Colonic mucosa (tissue), 4 donors: ENCODE measurements at regions of chr13 and their contacts with region 1.

Region 1: DNA sequence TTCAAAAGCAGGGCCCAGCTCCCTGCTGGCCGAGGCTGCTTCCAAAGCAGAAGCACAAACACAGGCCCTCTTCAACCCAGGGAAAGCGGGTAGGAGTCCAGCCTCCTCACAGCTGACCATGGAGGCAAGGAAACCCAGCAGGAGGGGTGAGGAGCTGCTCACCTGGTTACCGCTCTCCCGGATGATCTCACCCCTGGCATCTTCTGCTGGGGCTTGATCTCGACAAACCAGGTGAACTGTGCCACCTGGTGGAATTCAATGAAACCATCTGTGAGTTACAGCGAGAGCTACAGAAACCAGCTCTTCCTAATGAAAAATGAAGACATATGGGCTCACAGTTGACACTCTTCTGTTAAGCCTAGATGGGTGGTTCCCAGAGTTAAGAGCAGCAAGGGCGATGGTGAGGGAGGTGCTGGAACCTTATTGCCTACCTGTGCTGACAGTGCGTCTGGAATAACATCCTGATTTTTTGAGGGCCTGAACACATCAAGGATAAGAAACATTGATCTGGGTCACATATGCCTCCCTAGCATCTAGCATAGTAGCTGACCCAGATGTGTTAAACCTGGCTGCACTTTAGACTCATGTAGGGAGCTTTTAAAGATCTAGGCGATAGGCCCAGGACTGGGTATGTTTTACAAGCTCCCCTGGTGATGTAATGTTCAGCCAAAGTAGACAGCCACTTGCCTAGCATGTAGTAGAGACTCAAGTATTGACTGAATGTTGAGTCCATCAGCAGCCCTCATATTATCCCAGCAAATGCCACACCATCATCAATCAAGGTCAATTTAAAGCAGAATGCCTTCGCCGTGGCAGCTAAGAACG is 6.1 kb downstream of the DHRS12 start:
- DNase-seq: peak; percentile 42
- H3K4me3 ChIP-seq: no peak overlapping the region
- H3K27ac ChIP-seq: no peak overlapping the region
- H3K4me1 ChIP-seq: peaks cover 7% of the 10 kb centered on the region
- H3K27me3 ChIP-seq: no peaks in the 10 kb centered on the region
- CTCF ChIP-seq: peak; percentile 43

Region 2: DNA sequence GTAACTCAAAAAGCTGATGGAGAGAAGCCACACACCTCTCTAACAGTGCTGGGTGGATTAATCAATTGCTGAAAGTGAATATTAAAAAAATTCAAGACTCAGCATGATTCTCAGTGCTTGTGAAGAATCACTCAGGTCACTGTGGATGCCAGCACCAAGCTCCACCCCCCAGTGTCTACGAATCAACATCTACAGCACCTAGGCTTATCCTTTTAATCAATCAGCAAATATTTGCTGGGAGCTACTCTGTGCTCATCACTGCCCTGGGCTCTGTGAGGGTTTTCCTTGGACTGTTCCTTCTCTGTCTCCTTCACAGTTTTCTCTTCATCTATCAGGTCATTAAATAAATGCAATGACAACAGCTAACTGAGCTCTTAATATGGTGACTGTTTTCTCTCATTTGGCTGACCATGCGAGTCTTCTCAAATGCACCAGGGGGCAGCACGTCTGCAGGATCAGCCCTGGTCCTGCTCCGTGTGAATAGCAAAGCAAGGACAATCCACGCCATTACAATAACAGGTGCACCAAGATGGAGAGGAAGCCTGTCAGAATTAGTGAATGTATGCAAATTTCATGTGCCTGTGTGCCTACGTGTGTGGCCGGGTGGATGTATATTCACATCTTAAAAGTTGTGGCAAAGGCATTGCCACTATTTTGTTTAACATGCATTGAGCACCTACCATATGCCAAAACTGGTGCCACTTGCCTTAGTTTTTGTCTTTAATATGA is 672.2 kb before region 1 on chr13:
- intact Hi-C with region 1: loop called (anchors 10 kb)
- DNase-seq: peak; percentile 43
- H3K4me3 ChIP-seq: no peak overlapping the region
- H3K27ac ChIP-seq: no peak overlapping the region
- H3K4me1 ChIP-seq: no peaks in the 10 kb centered on the region
- H3K27me3 ChIP-seq: peaks cover 2% of the 10 kb centered on the region
- CTCF ChIP-seq: peak; percentile 56

Region 3: GRCh38 chr13:51405176-51405575 is 392.7 kb before region 1 on chr13:
- intact Hi-C with region 1: no loop called
- DNase-seq: no peak
- H3K4me3 ChIP-seq: no peak overlapping the region
- H3K27ac ChIP-seq: no peak overlapping the region
- H3K4me1 ChIP-seq: no peaks in the 10 kb centered on the region
- H3K27me3 ChIP-seq: no peaks in the 10 kb centered on the region
- CTCF ChIP-seq: no peak

Region 4: GRCh38 chr13:51435002-51435578 is 362.8 kb before region 1 on chr13:
- intact Hi-C with region 1: loop called (anchors 5 kb)
- DNase-seq: no peak
- H3K4me3 ChIP-seq: no peak overlapping the region
- H3K27ac ChIP-seq: no peak overlapping the region
- H3K4me1 ChIP-seq: no peaks in the 10 kb centered on the region
- H3K27me3 ChIP-seq: no peaks in the 10 kb centered on the region
- CTCF ChIP-seq: peak; percentile 27

Region 5: DNA sequence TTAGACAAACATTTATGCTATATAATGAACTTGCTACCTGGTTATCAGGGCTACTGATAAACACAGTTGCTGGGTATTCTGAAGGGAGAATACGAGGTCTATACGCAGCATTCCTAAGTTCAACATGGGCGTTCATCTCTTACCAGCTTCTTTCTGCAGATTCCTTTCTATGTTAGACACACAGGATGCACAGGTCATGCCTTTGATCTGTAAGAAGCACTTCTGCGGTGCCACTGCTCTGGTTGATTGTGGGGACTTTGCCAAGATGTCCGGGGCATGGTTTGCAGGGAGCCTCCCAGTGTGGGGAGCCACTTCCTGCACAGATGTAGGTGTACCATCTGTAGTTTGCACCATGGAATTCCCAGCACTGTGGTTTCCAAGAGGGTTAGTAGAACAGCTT is 172.5 kb after region 1 on chr13:
- intact Hi-C with region 1: no loop called
- DNase-seq: no peak
- H3K4me3 ChIP-seq: no peak overlapping the region
- H3K27ac ChIP-seq: no peak overlapping the region
- H3K4me1 ChIP-seq: no peaks in the 10 kb centered on the region
- H3K27me3 ChIP-seq: no peaks in the 10 kb centered on the region
- CTCF ChIP-seq: no peak